Common myeloid progenitor, CD34-positive (primary cell): ENCODE measurements at regions of chr3 and their contacts with region 1.

Region 1: DNA sequence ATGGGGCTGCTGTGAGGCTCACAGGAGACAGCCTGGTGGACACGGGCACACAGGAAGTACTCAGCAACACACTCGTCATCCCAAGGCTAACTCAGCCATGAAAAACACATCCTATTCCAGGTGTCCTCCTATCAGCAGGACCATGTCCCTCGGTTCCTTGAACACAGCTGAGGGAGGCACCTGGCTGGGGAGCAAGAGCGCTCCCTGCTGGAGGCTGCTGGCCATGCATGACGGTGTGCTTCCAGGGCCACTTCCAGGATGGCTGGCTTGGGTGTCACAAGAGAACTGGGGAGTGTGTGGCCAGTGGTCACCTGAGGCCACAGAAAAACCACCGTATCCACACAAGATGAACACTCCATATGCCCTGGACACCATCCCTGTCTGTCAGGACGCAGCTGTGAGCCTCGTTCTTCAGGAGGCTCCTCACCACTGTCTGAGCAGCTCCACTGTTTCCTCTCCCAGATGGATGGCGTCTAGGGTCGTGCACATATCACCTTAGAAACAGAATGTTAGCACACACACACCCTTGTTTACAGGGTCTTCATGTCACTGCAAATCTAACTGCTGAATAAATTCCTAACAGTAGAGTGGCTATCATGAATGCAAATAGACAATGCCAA is 31.0 kb downstream of the POC1A start:
- DNase-seq: peak; percentile 68 to 79 (median 70)
- H3K4me3 ChIP-seq: no peak overlapping the region
- H3K27ac ChIP-seq: no peak overlapping the region
- H3K4me1 ChIP-seq: peaks cover 10 to 44% (median 38%) of the 10 kb centered on the region in 4 experiments
- H3K27me3 ChIP-seq: no peaks in the 10 kb centered on the region

Region 2: DNA sequence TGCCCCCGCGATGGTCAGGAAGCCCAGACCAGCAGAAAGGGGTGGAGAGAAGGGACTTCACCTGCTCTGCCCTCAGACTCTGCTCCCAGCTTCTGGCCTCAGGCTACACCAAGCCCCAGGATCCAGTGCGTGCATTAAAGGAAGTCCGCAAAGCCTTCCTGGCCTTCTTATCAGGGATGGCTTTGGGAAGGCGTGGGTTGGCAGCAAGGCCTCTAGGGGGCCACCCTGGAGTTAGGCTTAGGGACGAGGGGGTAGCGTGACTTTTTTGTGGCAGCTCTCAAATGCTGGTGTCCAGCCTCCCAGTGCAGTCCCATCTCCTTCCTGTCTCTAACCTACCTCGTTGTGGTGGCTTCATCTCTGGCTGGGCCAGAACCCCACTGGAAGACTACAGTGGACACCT is 108.6 kb before region 1 on chr3:
- CTCF ChIA-PET with region 1: interaction called, 16 read pairs
- POLR2A ChIA-PET with region 1: no interaction called
- DNase-seq: peak in 2 of 3 donors; percentile 18 to 33
- H3K4me3 ChIP-seq: no peak overlapping the region
- H3K27ac ChIP-seq: no peak overlapping the region
- H3K4me1 ChIP-seq: peaks cover 0 to 16% (median 6%) of the 10 kb centered on the region in 4 experiments
- H3K27me3 ChIP-seq: no peaks in the 10 kb centered on the region

Region 3: GRCh38 chr3:52056968-52057805 is 66.0 kb before region 1 on chr3:
- CTCF ChIA-PET with region 1: interaction called, 105 read pairs
- POLR2A ChIA-PET with region 1: no interaction called
- DNase-seq: peak; percentile 98 to 99 (median 99)
- H3K4me3 ChIP-seq: peak overlapping the region; percentile 59 to 98 (median 84)
- H3K27ac ChIP-seq: peak overlapping the region; percentile 50 to 78
- H3K4me1 ChIP-seq: peaks cover 2 to 48% (median 46%) of the 10 kb centered on the region in 4 experiments
- H3K27me3 ChIP-seq: no peaks in the 10 kb centered on the region

Region 4: GRCh38 chr3:52093756-52094545 is 29.3 kb before region 1 on chr3:
- CTCF ChIA-PET with region 1: interaction called, 16 read pairs
- POLR2A ChIA-PET with region 1: no interaction called
- DNase-seq: no peak
- H3K4me3 ChIP-seq: no peak overlapping the region
- H3K27ac ChIP-seq: no peak overlapping the region
- H3K4me1 ChIP-seq: peaks cover 0 to 21% (median 3%) of the 10 kb centered on the region in 4 experiments
- H3K27me3 ChIP-seq: no peaks in the 10 kb centered on the region

Region 5: DNA sequence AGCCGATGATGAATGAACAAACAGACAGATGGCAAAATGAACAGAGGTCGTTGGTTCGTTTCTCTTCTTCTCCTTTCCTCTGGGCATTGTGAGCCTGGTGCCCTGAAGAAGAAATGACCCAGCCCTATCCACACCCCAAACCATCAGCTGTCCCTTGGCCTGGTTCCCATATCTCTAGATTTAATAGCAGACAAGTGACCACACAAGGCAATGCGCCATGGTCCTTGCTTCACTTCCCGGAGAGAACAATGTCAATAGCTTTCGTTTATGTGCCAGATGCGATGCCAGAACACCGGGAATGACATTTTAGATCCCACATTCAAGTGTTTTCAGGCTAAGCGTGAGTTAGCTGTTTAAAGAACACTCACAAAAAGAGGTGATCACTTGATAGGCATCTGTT is 13.3 kb after region 1 on chr3:
- CTCF ChIA-PET with region 1: interaction called, 21 read pairs
- POLR2A ChIA-PET with region 1: no interaction called
- DNase-seq: no peak
- H3K4me3 ChIP-seq: no peak overlapping the region
- H3K27ac ChIP-seq: peak overlapping the region in 1 of 2 experiments; percentile 32
- H3K4me1 ChIP-seq: peaks cover 0 to 11% (median 4%) of the 10 kb centered on the region in 4 experiments
- H3K27me3 ChIP-seq: no peaks in the 10 kb centered on the region